ENCODE measurements at regions of chr2 and their contacts with region 1.

Region 1: GRCh38 chr2:66434679-66435548 is at the start of gene MEIS1:
- DNase-seq: peak; percentile 90 to 96 (median 93)
- H3K4me3 ChIP-seq: peak within 1 kb of the TSS; percentile 80
- H3K27ac ChIP-seq: peak within 1 kb of the TSS; percentile 84 to 89
- H3K4me1 ChIP-seq: no peaks in the 10 kb centered on the region
- H3K27me3 ChIP-seq: no peaks in the 10 kb centered on the region
- CTCF ChIP-seq: no peak
- EP300 ChIP-seq: peak; percentile 43
- POLR2A ChIP-seq: peak; percentile 97
- total RNA-seq, gene MEIS1: 33.9 to 163 (median 92.3) TPM

Region 2: DNA sequence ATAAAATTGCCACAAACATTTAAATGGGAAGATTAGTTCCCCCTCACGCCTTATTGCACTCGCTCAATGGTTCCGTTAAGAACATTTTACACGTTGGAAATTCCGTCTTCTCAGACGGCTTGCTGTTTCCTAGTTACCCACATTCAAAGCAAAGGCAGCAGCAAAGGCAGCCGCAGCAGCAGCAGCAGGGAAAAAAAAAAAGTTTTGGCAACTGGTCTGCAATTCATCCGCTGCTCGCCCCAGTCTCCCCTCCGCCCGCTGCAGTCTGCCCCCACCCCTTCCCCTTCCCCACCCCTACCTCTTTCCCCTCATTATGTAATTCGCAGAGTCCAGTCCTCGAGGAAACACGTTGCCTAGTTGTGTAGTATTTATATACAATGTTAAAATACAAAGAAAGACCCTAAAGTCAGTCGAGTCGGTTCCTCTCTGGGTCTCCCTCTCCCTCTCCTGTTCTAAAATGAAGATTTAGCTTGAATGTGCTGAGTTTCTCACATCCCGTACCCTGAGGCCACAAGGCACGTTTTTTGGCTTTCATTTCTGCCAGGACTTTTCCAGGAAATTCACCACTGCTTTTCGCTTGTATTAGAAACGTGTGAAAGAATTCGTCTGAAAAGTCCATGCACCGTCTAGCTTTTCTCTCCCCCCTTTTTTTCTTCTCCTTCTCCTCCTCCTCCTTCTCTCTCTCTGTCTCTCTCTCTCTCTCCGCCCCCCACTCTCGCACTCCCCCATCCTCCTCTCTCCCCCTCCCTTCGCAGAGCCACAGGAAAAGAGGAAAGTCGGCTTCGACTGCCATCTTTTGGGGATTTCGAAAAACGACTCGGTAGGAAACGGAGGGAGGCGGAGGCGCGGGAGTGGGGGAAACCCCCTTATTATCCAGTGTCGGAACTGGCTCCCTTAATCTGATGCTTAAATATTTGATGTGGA is 140.0 kb after region 1 on chr2:
- intact Hi-C with region 1: loop called (anchors 2 to 5 kb)
- DNase-seq: peak; percentile 76 to 85 (median 83)
- H3K4me3 ChIP-seq: peak overlapping the region; percentile 70
- H3K27ac ChIP-seq: peak overlapping the region in 1 of 2 donors; percentile 83
- H3K4me1 ChIP-seq: peaks cover 3% of the 10 kb centered on the region
- H3K27me3 ChIP-seq: no peaks in the 10 kb centered on the region
- CTCF ChIP-seq: peak; percentile 14 to 58 (median 48)
- EP300 ChIP-seq: peak; percentile 12
- POLR2A ChIP-seq: no peak

Region 3: GRCh38 chr2:67397143-67397986 is 962.5 kb after region 1 on chr2 and contains the start of gene ETAA1:
- intact Hi-C with region 1: loop called in 1 of 4 experiments (anchors 5 kb)
- DNase-seq: peak; percentile 91 to 96 (median 93)
- H3K4me3 ChIP-seq: peak within 1 kb of the TSS; percentile 80
- H3K27ac ChIP-seq: peak within 1 kb of the TSS; percentile 93
- H3K4me1 ChIP-seq: peaks cover 2% of the 10 kb centered on the region
- H3K27me3 ChIP-seq: no peaks in the 10 kb centered on the region
- CTCF ChIP-seq: no peak
- EP300 ChIP-seq: no peak
- POLR2A ChIP-seq: peak; percentile 80
- total RNA-seq, gene ETAA1: 10.4 to 22.7 (median 14.1) TPM

Region 4: DNA sequence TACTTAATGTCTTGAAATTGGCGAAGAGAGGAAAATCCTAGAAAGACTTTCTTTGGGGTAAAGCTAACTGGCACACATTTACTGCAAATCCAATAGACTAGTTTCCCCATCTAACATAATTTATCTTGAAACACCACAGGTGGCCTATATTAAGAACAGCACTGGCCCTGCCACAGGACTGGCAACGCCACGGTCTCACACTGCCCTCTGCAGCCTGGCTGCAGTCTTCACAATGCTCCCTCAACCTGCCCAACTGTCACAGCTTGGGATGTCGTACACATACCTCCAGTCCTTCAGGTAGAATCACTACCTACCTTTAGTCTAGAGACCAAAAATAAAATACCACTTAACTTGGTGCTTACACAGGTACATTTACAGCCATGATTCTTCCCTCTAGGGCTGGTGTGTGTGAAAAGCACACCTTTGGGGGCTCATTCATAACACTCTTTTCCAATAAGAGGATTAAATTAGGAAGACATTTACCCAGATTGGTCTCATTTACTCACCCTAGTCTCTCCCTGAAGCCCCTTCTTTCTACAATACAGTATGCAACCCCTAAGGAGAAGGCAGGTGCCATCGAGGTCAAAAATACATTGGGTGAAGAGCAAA is 1405.7 kb after region 1 on chr2:
- intact Hi-C with region 1: loop called in 3 of 4 experiments (anchors 5 to 10 kb)
- DNase-seq: peak; percentile 56 to 78 (median 59)
- H3K4me3 ChIP-seq: no peak overlapping the region
- H3K27ac ChIP-seq: no peak overlapping the region
- H3K4me1 ChIP-seq: peaks cover 2% of the 10 kb centered on the region
- H3K27me3 ChIP-seq: no peaks in the 10 kb centered on the region
- CTCF ChIP-seq: peak in 2 of 3 donors; percentile 53 to 60
- EP300 ChIP-seq: no peak
- POLR2A ChIP-seq: no peak